Activated CD4-positive, alpha-beta T cell treated with anti-CD3 and anti-CD28 coated beads for 36 hours (primary cell): ENCODE measurements at regions of chr12 and their contacts with region 1.

Region 1: GRCh38 chr12:12786716-12787601 is 1.5 kb downstream of the APOLD1 start:
- DNase-seq: peak; percentile 84
- ATAC-seq: peak; percentile 89
- H3K4me3 Mint-ChIP-seq: peak overlapping the region; percentile 81
- H3K27ac Mint-ChIP-seq: peak overlapping the region; percentile 90
- H3K4me1 Mint-ChIP-seq: peaks cover 28% of the 10 kb centered on the region
- H3K27me3 Mint-ChIP-seq: no peaks in the 10 kb centered on the region

Region 2: DNA sequence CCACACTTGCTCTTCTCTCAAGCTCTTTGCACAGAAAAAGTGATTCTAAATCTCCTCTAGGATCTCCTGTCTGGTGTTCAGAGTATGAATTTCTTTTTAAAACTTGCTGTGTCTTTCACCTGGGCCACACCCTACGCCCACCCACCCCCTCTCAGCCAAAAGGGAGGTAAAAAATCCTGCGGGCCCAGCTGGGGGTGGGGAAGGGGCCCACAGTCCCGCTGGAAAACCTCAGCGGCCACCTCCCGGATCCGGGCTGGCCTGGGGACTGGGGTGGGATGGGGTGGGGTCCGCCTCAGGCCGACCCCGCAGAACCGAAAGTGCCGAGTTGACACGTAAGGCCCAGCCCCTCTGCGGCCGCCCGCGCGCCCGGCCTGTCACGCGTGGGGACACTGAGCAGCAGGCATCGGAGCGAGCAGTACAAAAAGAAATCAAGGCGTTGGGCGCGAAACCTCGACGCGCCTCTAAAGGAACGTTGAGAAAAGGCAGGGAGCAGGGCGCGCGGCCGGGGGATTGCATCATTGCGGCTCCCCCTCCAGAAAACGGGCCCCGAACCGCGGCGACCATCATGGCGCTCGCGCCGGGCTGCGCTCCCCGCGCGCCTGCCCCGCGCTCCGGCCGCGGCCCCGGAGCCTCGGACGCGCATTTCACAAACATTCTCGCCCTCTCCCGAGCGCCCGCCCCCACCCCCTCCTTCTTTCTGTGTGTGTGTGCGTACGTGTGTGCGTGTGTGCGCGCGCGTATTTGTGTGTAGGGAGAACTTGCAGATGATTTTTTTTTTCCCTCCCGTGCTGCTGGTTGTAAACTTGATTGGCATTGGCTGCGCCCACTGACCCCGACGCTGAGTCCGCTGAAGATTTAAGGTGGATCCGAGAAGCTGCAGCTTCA is 62.1 kb before region 1 on chr12:
- CTCF ChIA-PET with region 1: no interaction called
- POLR2A ChIA-PET with region 1: interaction called, 3 read pairs
- intact Hi-C with region 1: loop called in 1 of 2 experiments (anchors 2 kb)
- DNase-seq: peak; percentile 94
- ATAC-seq: peak; percentile 59
- H3K4me3 Mint-ChIP-seq: peak overlapping the region; percentile 93
- H3K27ac Mint-ChIP-seq: peak overlapping the region; percentile 98
- H3K4me1 Mint-ChIP-seq: peaks cover 45% of the 10 kb centered on the region
- H3K27me3 Mint-ChIP-seq: no peaks in the 10 kb centered on the region

Region 3: GRCh38 chr12:12770262-12770661 is 16.7 kb before region 1 on chr12:
- CTCF ChIA-PET with region 1: no interaction called
- POLR2A ChIA-PET with region 1: interaction called, 14 read pairs
- intact Hi-C with region 1: no loop called
- DNase-seq: no peak
- ATAC-seq: no peak
- H3K4me3 Mint-ChIP-seq: no peak overlapping the region
- H3K27ac Mint-ChIP-seq: no peak overlapping the region
- H3K4me1 Mint-ChIP-seq: no peaks in the 10 kb centered on the region
- H3K27me3 Mint-ChIP-seq: no peaks in the 10 kb centered on the region

Region 4: DNA sequence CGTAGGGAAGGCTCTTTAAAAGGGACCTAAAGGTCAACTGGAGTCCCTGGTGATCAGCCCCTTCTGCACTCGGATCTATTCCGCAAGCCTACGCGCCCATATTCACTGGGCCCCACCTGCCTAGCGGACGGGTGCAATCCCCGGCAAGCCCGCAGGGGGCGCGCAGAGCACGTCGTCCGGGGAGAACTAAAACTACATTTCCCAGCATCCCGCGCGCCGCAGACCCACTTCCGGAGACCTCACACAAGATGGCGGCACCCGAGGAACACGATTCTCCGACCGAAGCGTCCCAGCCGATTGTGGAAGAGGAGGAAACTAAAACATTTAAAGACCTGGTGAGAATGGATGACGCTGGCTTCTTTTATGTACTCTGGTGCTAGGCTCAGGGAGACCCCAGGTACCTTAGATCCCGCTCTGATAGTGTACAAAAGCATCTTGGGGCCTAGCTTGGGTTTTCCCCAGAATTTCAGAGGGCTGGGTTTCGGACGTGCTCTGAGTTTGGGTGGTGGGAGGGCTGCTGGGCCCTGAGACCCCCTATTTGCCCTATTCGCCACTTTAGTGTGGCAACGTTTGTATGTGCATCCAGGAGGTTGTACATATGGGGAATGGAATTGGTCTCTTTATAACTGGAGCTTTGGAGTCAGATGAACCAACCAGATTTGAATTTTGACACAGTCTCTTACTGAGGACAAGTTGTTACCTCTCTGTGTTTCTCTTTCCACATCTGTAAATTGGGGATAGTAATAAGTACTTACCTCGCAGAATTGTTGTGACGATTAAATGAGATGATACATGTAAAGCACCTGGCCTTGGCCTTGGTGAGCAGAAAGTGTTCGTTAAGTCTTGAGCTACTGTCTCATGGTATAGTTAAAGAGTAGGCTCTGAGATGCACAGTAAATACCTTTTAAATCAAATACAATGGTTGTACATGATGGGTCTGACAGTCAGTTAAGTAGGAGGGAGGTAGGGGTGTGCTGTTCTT is 26.5 kb after region 1 on chr12 and contains the start of gene DDX47:
- CTCF ChIA-PET with region 1: interaction called, 22 read pairs
- POLR2A ChIA-PET with region 1: interaction called, 3 read pairs
- intact Hi-C with region 1: loop called (anchors 1 to 2 kb)
- DNase-seq: peak; percentile 99
- ATAC-seq: peak; percentile 90
- H3K4me3 Mint-ChIP-seq: peak within 1 kb of the TSS; percentile 95
- H3K27ac Mint-ChIP-seq: peak within 1 kb of the TSS; percentile 91
- H3K4me1 Mint-ChIP-seq: peaks cover 61% of the 10 kb centered on the region
- H3K27me3 Mint-ChIP-seq: no peaks in the 10 kb centered on the region
- total RNA-seq, gene DDX47: 91.3 to 91.9 TPM

Region 5: DNA sequence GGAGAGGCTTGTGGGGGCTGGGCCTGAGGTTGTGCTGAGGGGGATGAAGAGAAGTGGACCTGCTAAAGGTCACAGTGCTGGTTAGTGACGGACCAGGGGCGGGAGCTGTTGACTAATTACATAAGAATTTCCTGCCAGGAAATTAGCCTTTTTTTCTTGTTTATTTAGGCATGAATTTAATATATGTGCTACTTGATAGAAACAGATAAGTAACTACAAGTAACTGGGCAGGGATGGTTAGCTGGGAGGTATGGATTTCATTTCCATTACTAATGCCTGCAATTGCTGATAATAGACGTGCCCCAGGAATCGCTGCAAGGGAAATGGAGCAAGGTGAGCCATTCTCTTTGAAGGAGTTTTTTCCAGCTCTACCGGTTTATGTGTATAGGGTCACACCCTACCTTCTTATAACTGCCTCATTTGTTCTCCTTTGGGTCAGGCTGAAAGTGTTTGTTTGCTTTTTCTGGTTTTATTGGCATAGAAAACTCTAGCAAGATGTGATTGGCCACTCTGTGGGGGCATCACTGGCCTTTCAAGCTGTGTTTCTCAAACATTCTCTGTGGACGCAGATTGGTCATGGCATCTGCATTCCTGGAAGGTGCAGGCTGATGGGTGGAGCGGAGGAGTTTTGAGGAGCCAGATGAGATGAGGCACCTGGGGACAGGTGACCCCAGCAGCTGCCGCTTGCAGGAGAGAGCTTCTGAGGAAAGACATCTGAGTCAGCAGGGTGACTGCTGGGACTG is 85.4 kb after region 1 on chr12:
- CTCF ChIA-PET with region 1: no interaction called
- POLR2A ChIA-PET with region 1: no interaction called
- intact Hi-C with region 1: no loop called
- DNase-seq: no peak
- ATAC-seq: no peak
- H3K4me3 Mint-ChIP-seq: no peak overlapping the region
- H3K27ac Mint-ChIP-seq: no peak overlapping the region
- H3K4me1 Mint-ChIP-seq: no peaks in the 10 kb centered on the region
- H3K27me3 Mint-ChIP-seq: no peaks in the 10 kb centered on the region

Region 6: GRCh38 chr12:12899530-12900380 is 112.8 kb after region 1 on chr12:
- CTCF ChIA-PET with region 1: no interaction called
- POLR2A ChIA-PET with region 1: no interaction called
- intact Hi-C with region 1: loop called (anchors 2 to 5 kb)
- DNase-seq: peak; percentile 87
- ATAC-seq: peak; percentile 87
- H3K4me3 Mint-ChIP-seq: no peak overlapping the region
- H3K27ac Mint-ChIP-seq: peak overlapping the region; percentile 88
- H3K4me1 Mint-ChIP-seq: peaks cover 39% of the 10 kb centered on the region
- H3K27me3 Mint-ChIP-seq: peaks cover 16% of the 10 kb centered on the region

Region 7: GRCh38 chr12:13044002-13044905 is 257.3 kb after region 1 on chr12 and contains the start of gene FAM234B:
- CTCF ChIA-PET with region 1: no interaction called
- POLR2A ChIA-PET with region 1: no interaction called
- intact Hi-C with region 1: loop called in 1 of 2 experiments (anchors 5 kb)
- DNase-seq: peak; percentile 85
- ATAC-seq: peak; percentile 88
- H3K4me3 Mint-ChIP-seq: peak within 1 kb of the TSS; percentile 83
- H3K27ac Mint-ChIP-seq: peak within 1 kb of the TSS; percentile 77
- H3K4me1 Mint-ChIP-seq: peaks cover 27% of the 10 kb centered on the region
- H3K27me3 Mint-ChIP-seq: peaks cover 5% of the 10 kb centered on the region
- total RNA-seq, gene FAM234B: 11.1 to 12.2 TPM

Region 8: DNA sequence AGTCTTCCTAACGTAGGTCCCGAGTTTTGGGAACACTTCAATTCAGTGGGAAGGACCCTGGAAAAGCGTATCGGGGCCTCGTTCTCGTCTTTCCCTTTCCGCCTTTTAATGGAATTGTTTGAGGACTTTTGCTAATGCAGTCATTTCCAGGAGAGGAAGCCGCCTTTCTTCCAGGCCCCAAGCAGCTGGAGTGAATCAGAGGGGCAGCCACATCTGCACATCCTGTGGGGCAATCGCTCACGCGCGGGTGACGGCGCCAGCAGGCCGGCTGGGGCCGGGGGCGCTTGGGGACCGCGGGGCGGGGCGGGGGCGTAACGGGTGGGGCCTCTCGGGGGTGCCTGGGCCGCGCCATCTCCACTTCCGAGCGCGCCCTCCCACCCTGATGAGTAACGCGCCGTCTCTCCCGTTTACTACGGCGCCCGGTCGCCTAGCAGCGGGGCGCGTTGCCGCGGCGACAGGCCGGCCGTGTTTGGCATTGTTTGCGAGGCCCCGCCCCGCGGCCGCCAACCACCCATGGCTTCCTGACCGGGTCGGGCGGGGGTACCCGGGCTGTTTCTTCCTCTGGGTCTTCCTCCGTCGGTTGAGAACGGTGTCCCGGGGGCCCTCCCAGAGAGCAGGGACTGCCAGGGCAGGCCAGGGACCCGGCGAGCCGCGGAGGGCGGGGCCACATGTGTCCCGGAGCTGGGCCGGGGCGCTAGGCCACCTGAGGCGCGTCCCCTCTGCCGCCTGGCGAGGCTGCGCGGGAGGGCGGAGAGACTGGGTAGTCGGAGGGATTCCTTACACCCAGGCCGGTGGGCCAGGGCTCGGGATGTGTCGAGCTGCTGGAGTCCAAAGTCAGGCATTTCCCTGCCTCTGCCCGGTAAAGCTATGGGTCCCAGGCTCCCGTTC is 314.2 kb after region 1 on chr12:
- CTCF ChIA-PET with region 1: interaction called, 4 read pairs
- POLR2A ChIA-PET with region 1: no interaction called
- intact Hi-C with region 1: loop called (anchors 1 to 5 kb)
- DNase-seq: peak; percentile 93
- ATAC-seq: peak; percentile 70
- H3K4me3 Mint-ChIP-seq: peak overlapping the region; percentile 63
- H3K27ac Mint-ChIP-seq: peak overlapping the region; percentile 72
- H3K4me1 Mint-ChIP-seq: peaks cover 58% of the 10 kb centered on the region
- H3K27me3 Mint-ChIP-seq: no peaks in the 10 kb centered on the region